ENCODE measurements at regions of chr4 and their contacts with region 1.

Region 1: GRCh38 chr4:146945556-146946374 is at the start of gene TTC29:
- DNase-seq: peak; percentile 66 to 91
- H3K4me3 ChIP-seq: peak within 1 kb of the TSS; percentile 43 to 66
- H3K27ac ChIP-seq: no peak within 1 kb of the TSS
- H3K4me1 ChIP-seq: peaks cover 4 to 12% of the 10 kb centered on the region in 2 donors
- H3K27me3 ChIP-seq: no peaks in the 10 kb centered on the region
- CTCF ChIP-seq: no peak
- total RNA-seq, gene TTC29: not detected

Region 2: DNA sequence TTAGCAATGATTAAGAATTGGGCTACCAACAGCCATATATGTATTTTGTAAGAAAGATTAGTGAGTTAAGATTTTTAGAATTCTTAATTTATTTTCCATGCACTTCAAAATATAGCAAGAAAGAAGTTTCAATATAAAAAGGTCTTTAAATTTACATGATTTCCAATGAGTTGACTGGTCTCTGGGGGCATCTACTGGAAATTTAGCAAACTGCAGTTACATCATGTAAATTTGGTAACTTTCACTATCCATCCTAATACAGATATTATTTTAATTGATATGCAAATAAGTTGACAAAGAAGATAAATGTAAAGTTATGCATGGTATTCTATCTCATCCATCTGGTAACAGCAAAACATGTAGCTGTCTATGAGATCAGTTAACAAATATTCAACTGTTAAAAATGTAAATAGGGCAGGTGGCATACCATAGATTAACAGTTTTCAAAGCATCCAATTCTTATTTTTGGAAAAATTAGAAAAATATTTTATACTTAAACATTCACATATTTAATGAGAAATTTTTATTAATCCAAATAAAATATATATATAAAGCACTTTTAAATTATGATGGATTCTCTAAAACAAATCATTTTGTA is 29.2 kb before region 1 on chr4:
- intact Hi-C with region 1: no loop called
- DNase-seq: no peak
- H3K4me3 ChIP-seq: no peak overlapping the region
- H3K27ac ChIP-seq: no peak overlapping the region
- H3K4me1 ChIP-seq: no peaks in the 10 kb centered on the region
- H3K27me3 ChIP-seq: no peaks in the 10 kb centered on the region
- CTCF ChIP-seq: peak; percentile 40 to 60 (median 53)

Region 3: DNA sequence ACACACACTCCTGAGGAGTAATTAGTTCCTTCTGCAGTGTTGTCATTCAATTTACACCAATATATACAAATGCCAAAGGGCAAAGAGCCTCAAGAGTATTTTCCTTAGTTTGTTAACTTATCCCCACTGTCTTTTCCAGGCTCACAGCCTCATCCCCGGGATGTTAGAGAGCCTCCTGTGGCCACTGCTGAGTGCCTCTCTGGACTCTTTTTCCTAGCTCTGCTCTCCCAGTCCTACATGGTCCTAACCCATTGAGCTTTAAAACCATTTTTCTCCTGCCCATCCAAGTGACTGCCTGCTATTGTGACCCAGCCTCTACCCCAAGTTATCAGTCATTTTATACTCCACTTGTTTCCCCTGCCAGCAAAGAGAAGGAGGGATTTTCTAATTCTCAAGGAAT is 23.4 kb after region 1 on chr4:
- intact Hi-C with region 1: no loop called
- DNase-seq: no peak
- H3K4me3 ChIP-seq: no peak overlapping the region
- H3K27ac ChIP-seq: no peak overlapping the region
- H3K4me1 ChIP-seq: no peaks in the 10 kb centered on the region
- H3K27me3 ChIP-seq: no peaks in the 10 kb centered on the region
- CTCF ChIP-seq: no peak

Region 4: DNA sequence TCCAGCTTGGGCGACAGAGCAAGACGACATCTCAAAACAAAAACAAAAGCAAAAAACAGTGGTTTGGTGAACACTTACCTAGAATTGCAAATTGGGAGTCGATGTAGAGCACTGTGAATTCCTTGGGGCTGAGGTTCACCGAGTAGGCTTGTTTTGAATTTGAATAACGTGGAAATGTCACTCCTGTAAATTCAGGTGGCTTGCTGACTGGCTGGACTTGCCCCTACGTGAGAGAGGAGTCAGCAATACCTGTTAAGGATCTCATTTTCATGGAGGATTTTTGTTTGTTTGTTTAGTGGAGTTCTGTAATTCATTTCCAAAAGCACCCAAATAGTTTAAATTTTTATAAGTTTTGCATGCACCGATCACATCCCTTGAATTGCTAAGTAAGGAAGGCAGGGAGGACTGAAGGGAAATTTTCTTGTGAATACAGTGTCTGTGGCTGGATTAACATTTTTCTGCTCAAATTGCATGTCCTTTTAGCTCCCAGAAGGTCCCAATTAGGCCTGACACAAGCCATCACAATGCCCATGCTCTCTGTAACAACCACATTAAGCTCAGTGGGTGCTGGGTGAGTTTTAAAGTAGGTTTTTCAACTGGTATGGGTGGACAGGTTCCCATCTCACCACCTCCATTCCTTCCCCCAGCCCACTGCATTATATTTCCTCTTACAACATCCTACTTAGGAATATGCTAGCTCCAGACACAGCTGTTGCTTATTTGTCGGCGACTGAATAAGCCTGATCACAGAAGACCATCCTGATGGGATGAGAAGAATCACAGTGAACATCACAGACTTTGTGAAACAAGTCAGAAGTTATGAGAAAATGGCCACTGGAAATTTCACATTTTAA is 58.4 kb after region 1 on chr4:
- intact Hi-C with region 1: no loop called
- DNase-seq: no peak
- H3K4me3 ChIP-seq: no peak overlapping the region
- H3K27ac ChIP-seq: no peak overlapping the region
- H3K4me1 ChIP-seq: no peaks in the 10 kb centered on the region
- H3K27me3 ChIP-seq: no peaks in the 10 kb centered on the region
- CTCF ChIP-seq: no peak

Region 5: DNA sequence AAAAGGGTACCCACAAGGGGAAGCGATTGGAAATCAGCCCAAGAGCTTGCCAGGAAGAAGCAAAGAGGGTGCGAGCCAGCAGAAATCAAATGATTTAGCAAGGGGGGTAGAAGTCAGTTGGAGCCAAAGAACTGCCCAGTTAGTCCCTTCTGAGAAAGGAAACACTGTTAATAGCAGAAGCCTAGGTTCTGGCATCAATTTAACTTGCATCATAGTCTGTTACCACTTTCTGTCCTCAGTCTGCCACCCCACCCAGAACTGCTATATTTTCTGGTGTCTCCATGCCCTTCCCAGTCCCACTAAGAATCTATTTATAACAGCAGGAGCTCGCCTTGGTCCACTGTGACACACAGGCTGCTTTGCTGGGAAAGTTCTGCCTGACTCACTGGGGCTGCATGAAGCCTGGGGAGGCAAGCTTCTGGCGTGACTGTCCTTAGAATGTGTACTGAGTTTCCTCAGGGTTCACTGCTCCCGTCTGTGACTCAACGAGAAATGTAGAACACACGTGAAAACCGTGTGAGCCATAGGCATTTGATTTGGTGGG is 157.7 kb after region 1 on chr4:
- intact Hi-C with region 1: loop called (anchors 10 kb)
- DNase-seq: peak; percentile 73 to 95
- H3K4me3 ChIP-seq: no peak overlapping the region
- H3K27ac ChIP-seq: peak overlapping the region; percentile 72 to 78
- H3K4me1 ChIP-seq: peaks cover 0 to 14% of the 10 kb centered on the region in 2 donors
- H3K27me3 ChIP-seq: no peaks in the 10 kb centered on the region
- CTCF ChIP-seq: no peak

Region 6: GRCh38 chr4:147182041-147182440 is 236.3 kb after region 1 on chr4:
- intact Hi-C with region 1: no loop called
- DNase-seq: no peak
- H3K4me3 ChIP-seq: no peak overlapping the region
- H3K27ac ChIP-seq: no peak overlapping the region
- H3K4me1 ChIP-seq: no peaks in the 10 kb centered on the region
- H3K27me3 ChIP-seq: no peaks in the 10 kb centered on the region
- CTCF ChIP-seq: no peak